GM23248 (cell line): ENCODE measurements at regions of chr7 and their contacts with region 1.

Region 1: DNA sequence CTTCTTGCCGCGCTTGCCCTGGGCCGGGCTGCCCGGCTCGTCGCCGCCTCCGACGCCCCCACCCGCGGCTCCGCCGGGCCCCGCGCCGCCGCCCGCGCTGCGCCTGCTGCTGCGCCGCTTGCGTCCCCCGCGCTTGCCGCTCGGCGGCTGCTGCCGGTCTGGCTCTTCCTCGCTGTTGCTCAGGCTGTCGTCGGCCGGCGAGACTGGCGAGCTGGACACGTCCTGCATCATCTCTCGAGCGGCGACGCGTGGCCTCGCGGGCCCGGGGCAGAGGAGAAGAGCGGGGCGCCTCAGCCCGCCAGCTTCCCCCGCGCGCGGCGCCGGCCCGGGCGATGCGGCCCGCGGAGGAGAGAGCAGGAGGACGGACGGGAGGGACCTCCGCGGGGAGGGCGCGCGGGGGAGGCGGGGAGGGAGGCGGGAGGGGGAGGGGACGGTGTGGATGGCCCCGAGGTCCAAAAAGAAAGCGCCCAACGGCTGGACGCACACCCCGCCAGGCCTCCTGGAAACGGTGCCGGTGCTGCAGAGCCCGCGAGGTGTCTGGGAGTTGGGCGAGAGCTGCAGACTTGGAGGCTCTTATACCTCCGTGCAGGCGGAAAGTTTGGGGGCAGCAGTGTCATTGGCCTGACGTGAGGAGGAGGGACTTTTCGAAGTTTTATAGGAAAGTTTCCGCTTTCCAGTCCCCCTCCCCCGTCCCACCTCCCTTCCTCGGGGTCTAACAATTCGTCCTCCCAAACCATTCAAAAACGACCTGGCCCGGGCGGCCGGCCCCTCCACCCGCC is at the start of gene TWIST1:
- DNase-seq: peak; percentile 98
- H3K4me3 ChIP-seq: peak within 1 kb of the TSS; percentile 88
- H3K27ac ChIP-seq: peak within 1 kb of the TSS; percentile 97
- H3K4me1 ChIP-seq: peaks cover 50% of the 10 kb centered on the region
- H3K27me3 ChIP-seq: no peaks in the 10 kb centered on the region
- total RNA-seq, gene TWIST1: 45.7 and 47.8 TPM in 2 replicates

Region 2: GRCh38 chr7:18352339-18353255 is 764.7 kb before region 1 on chr7:
- in situ Hi-C with region 1: loop called (anchors 25 kb)
- DNase-seq: peak; percentile 83
- H3K4me3 ChIP-seq: no peak overlapping the region
- H3K27ac ChIP-seq: no peak overlapping the region
- H3K4me1 ChIP-seq: peaks cover 11% of the 10 kb centered on the region
- H3K27me3 ChIP-seq: no peaks in the 10 kb centered on the region

Region 3: GRCh38 chr7:18495412-18496340 is 621.6 kb before region 1 on chr7 and contains the start of gene HDAC9:
- in situ Hi-C with region 1: no loop called
- DNase-seq: peak; percentile 83
- H3K4me3 ChIP-seq: peak within 1 kb of the TSS; percentile 54
- H3K27ac ChIP-seq: peak within 1 kb of the TSS; percentile 89
- H3K4me1 ChIP-seq: peaks cover 18% of the 10 kb centered on the region
- H3K27me3 ChIP-seq: no peaks in the 10 kb centered on the region
- total RNA-seq, gene HDAC9: 1.6 and 2.1 TPM in 2 replicates

Region 4: GRCh38 chr7:18590744-18591340 is 526.4 kb before region 1 on chr7:
- in situ Hi-C with region 1: loop called (anchors 10 kb)
- DNase-seq: peak; percentile 74
- H3K4me3 ChIP-seq: peak overlapping the region; percentile 71
- H3K27ac ChIP-seq: peak overlapping the region; percentile 28; the same call in 1 of the 2 replicates
- H3K4me1 ChIP-seq: peaks cover 7% of the 10 kb centered on the region; the same call in 1 of the 2 replicates
- H3K27me3 ChIP-seq: no peaks in the 10 kb centered on the region

Region 5: GRCh38 chr7:18693406-18693805 is 423.9 kb before region 1 on chr7:
- in situ Hi-C with region 1: loop called (anchors 10 kb)
- DNase-seq: peak; percentile 92
- H3K4me3 ChIP-seq: no peak overlapping the region
- H3K27ac ChIP-seq: no peak overlapping the region
- H3K4me1 ChIP-seq: peaks cover 7% of the 10 kb centered on the region
- H3K27me3 ChIP-seq: no peaks in the 10 kb centered on the region

Region 6: DNA sequence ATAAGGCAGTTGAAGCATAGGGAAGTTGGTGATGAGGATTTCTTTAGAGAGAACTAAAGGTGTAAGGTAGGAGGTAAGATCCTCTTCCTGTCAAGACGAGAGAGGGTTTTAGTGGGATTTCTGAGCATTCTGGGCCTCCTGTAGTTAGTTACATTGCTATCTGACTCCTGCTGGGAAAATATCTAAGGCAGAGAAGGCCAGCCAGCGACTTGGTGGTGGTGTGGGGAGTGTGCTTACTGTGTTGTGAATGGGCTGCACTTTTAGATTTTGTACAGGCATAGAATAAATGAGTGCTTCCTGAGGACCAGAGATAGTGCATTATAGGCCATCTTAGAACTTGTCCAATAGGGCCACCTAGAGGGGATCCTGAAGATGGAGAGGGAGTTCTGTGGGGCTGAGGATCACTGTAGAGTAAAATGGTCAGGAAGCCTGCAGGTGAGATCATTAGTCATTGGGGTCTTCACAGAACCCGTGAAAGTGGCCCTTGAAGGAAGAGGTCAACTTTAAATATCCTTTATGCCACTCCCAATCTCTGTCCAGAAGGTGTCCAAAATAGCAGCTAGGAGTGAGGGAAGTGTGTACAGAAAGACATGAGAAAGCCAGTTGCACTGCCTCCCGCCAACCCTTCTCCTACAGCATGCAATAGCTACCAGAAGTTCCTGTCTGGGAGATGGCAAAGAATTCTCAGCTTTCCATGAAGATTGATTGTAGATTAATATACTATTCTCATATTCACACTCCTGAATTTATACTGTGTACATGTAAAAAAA is 324.9 kb after region 1 on chr7:
- in situ Hi-C with region 1: loop called (anchors 5 kb)
- DNase-seq: peak; percentile 76
- H3K4me3 ChIP-seq: no peak overlapping the region
- H3K27ac ChIP-seq: no peak overlapping the region
- H3K4me1 ChIP-seq: no peaks in the 10 kb centered on the region
- H3K27me3 ChIP-seq: no peaks in the 10 kb centered on the region

Region 7: DNA sequence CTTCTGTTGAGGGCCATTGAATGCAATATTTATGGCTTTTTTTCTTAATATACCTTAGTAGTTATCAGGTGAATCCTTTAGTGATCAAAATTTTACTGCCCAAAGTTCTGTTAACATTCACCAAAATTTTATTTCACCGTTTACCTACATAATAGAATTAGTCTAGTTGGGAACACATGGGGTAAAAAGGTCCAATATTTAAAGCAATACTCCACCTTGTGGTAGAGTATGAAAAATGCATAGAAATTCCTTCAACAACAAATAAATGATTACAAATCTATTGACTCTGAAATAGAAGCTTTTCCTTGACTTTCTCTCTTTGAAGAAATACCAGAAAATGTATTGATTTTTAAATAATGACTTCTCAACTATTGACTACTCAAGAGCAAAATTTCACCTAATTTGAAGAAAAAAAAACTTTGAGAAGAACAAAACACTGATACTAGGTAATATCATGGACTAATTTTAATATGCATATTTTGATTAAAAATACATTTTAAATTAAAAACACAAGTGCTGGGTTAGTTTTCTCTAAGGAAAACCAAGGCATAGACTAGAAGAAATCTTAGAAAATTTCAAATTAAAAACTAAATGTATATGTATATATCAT is 548.2 kb after region 1 on chr7:
- in situ Hi-C with region 1: loop called (anchors 10 kb)
- DNase-seq: peak; percentile 58
- H3K4me3 ChIP-seq: no peak overlapping the region
- H3K27ac ChIP-seq: no peak overlapping the region
- H3K4me1 ChIP-seq: no peaks in the 10 kb centered on the region
- H3K27me3 ChIP-seq: no peaks in the 10 kb centered on the region